ENCODE measurements at regions of chr1 and their contacts with region 1.

Region 1: GRCh38 chr1:152001391-152002249 is 8.0 kb upstream of the S100A10 start:
- DNase-seq: peak; percentile 100
- H3K4me3 ChIP-seq: no peak overlapping the region
- H3K27ac ChIP-seq: peak overlapping the region; percentile 96
- H3K4me1 ChIP-seq: peaks cover 73% of the 10 kb centered on the region
- H3K27me3 ChIP-seq: no peaks in the 10 kb centered on the region
- CTCF ChIP-seq: peak; percentile 92 to 96

Region 2: GRCh38 chr1:151762941-151763921 is 238.4 kb before region 1 on chr1 and contains the start of gene MRPL9:
- CTCF ChIA-PET with region 1: no interaction called
- dilution Hi-C with region 1: no loop called
- in situ Hi-C with region 1: no loop called
- intact Hi-C with region 1: loop called (anchors 10 kb)
- DNase-seq: peak; percentile 80
- H3K4me3 ChIP-seq: peak within 1 kb of the TSS; percentile 86 to 93 (median 89)
- H3K27ac ChIP-seq: peak within 1 kb of the TSS; percentile 85
- H3K4me1 ChIP-seq: peaks cover 19% of the 10 kb centered on the region
- H3K27me3 ChIP-seq: no peaks in the 10 kb centered on the region
- CTCF ChIP-seq: no peak
- total RNA-seq, gene MRPL9: 47.5 to 77.4 TPM

Region 3: GRCh38 chr1:151909150-151910149 is 92.2 kb before region 1 on chr1 and contains the start of gene THEM4:
- CTCF ChIA-PET with region 1: interaction called, 3 read pairs
- dilution Hi-C with region 1: no loop called
- in situ Hi-C with region 1: no loop called
- intact Hi-C with region 1: loop called (anchors 1 kb)
- DNase-seq: peak; percentile 96
- H3K4me3 ChIP-seq: peak within 1 kb of the TSS; percentile 73 to 81 (median 75)
- H3K27ac ChIP-seq: peak within 1 kb of the TSS; percentile 86
- H3K4me1 ChIP-seq: no peaks in the 10 kb centered on the region
- H3K27me3 ChIP-seq: no peaks in the 10 kb centered on the region
- CTCF ChIP-seq: no peak
- total RNA-seq, gene THEM4: 15.3 to 18.8 TPM

Region 4: DNA sequence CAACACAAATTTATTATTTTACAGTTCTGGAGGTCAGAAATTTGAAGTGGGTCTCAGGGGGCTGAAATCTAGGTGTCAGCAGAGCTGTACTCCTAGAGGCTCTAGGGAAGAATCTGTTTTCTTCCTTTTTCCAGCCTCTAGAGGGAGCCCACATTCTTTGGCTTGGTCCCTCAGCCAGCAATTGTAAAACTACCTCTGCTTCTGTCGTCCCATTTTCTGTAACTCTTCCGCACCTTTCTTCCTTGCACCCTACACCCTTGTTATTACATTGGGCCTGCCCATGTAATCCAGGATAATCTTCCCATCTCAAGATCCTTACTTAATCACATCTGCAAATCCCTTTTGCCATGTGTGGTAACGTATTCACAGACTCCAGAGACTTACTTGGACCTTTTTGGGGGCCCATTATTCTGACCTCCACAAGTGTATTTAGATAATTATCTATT is 67.5 kb before region 1 on chr1:
- CTCF ChIA-PET with region 1: interaction called, 11 read pairs
- dilution Hi-C with region 1: no loop called
- in situ Hi-C with region 1: loop called in 1 of 2 experiments (anchors 10 kb)
- intact Hi-C with region 1: loop called (anchors 1 kb)
- DNase-seq: peak; percentile 57
- H3K4me3 ChIP-seq: no peak overlapping the region
- H3K27ac ChIP-seq: peak overlapping the region; percentile 4
- H3K4me1 ChIP-seq: no peaks in the 10 kb centered on the region
- H3K27me3 ChIP-seq: no peaks in the 10 kb centered on the region
- CTCF ChIP-seq: peak; percentile 85 to 95

Region 5: DNA sequence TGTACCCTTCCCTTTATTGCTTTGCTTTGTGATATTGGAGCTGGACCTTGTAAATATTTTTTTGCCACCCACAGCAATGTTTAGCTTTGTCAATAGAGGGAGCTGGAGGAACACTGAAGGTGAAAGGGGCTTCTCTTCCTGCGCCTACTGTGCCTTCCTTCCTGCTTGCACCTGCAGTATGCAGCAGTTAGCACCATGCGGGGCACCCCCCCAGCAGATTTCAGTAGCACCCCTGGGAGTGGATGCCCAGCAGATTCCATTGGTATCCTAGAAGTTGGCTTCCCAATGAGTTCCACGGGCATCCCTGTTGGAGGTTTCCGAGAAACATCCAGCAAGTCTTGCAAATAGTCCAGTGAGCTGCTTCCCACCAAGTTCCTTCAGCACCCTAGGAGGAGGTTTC is 33.6 kb before region 1 on chr1:
- CTCF ChIA-PET with region 1: interaction called, 26 read pairs
- dilution Hi-C with region 1: no loop called
- in situ Hi-C with region 1: no loop called
- intact Hi-C with region 1: loop called (anchors 1 kb)
- DNase-seq: peak; percentile 52
- H3K4me3 ChIP-seq: no peak overlapping the region
- H3K27ac ChIP-seq: no peak overlapping the region
- H3K4me1 ChIP-seq: peaks cover 65% of the 10 kb centered on the region
- H3K27me3 ChIP-seq: no peaks in the 10 kb centered on the region
- CTCF ChIP-seq: peak; percentile 87 to 90

Region 6: GRCh38 chr1:152034646-152035405 is 33.2 kb after region 1 on chr1:
- CTCF ChIA-PET with region 1: interaction called, 4 read pairs
- dilution Hi-C with region 1: no loop called
- in situ Hi-C with region 1: no loop called
- intact Hi-C with region 1: loop called (anchors 1 kb)
- DNase-seq: peak; percentile 82
- H3K4me3 ChIP-seq: peak overlapping the region; percentile 90 to 99 (median 95)
- H3K27ac ChIP-seq: peak overlapping the region; percentile 95
- H3K4me1 ChIP-seq: peaks cover 23% of the 10 kb centered on the region
- H3K27me3 ChIP-seq: no peaks in the 10 kb centered on the region
- CTCF ChIP-seq: peak; percentile 71 to 81

Measured in mammary epithelial cell (primary cell).